ENCODE measurements at regions of chr17 and their contacts with region 1.

Region 1: DNA sequence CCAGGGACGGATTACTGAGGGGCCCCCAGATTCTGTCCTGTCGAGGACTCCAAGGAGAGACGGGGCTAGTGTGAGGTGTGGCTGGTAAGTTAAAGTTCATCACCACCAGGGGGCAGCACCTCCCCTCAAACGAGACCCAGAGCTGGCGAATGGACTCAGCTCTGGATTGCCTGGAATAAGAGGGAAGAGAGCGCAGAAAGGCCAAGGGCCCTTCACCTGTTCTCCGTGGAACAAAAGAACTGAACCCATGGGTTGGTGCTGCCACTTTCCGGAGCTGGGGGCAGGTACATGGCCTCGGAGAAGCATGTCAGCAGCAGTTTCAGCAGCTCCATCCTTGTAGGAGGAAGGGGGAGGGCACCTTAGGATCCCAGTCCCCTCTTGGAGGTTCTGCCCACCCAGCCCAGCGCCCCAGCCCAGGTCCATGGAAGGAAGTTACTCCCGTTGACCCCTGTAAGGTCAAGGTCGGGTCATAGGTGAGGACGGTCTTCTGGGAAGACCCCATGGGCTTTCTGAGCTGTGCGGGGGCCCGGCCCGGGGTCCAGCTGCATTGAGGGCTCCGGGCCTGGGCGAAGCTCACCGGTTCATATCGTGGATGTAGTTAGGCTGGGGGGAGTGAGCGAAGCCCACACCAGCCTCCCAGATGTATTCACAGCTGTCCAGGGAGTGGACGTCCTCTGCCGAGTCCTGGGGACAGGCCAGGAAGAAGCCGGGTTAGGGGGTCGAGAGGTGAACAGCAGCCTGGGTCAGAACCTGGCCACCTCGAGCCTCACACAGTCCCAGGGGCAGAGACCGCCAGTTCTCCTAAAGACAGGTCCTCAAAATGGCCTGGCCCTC is 10.7 kb downstream of the HID1 start:
- DNase-seq: peak; percentile 69 to 88 (median 78)
- ATAC-seq: peak; percentile 80
- H3K4me3 ChIP-seq: no peak overlapping the region
- H3K4me3 Mint-ChIP-seq: peak overlapping the region in 2 of 10 donors; percentile 14 to 33
- H3K27ac ChIP-seq: no peak overlapping the region
- H3K27ac Mint-ChIP-seq: no peak overlapping the region
- H3K4me1 ChIP-seq: peaks cover 0 to 4% of the 10 kb centered on the region in 2 donors
- H3K4me1 Mint-ChIP-seq: peaks cover 0 to 8% (median 5%) of the 10 kb centered on the region in 7 donors
- H3K27me3 ChIP-seq: no peaks in the 10 kb centered on the region
- H3K27me3 Mint-ChIP-seq: peaks cover 0 to 3% (median 0%) of the 10 kb centered on the region in 5 donors

Region 2: DNA sequence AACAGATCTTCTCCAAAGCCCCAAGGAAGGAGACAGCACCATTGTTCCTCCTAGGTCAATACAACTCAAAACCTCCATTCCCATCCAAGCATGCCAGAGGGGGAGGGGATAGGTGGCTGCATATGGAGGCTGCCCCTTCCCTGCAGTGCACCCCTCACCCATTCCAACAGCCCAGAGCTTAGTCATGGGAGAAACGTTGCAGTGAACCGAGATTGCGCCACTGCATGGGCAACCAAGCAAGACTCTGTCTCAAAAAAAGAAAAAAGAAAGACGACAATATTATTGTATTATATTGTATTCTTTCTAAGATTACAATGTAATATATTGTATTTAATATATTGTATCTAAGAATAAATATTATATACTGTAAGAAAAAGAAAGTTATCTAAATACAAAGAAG is 302.0 kb before region 1 on chr17:
- CTCF ChIA-PET with region 1: interaction called, 5 read pairs
- POLR2A ChIA-PET with region 1: no interaction called
- intact Hi-C with region 1: loop called in 1 of 2 experiments (anchors 2 kb)
- DNase-seq: no peak
- ATAC-seq: no peak
- H3K4me3 ChIP-seq: no peak overlapping the region
- H3K4me3 Mint-ChIP-seq: no peak overlapping the region
- H3K27ac ChIP-seq: no peak overlapping the region
- H3K27ac Mint-ChIP-seq: peak overlapping the region in 1 of 9 donors; percentile 32
- H3K4me1 ChIP-seq: peaks cover 0 to 3% of the 10 kb centered on the region in 2 donors
- H3K4me1 Mint-ChIP-seq: peaks cover 4 to 9% (median 6%) of the 10 kb centered on the region in 7 donors
- H3K27me3 ChIP-seq: peaks cover 0 to 3% of the 10 kb centered on the region in 2 donors
- H3K27me3 Mint-ChIP-seq: peaks cover 29 to 78% (median 36%) of the 10 kb centered on the region in 5 donors

Region 3: GRCh38 chr17:74923533-74924249 is 38.2 kb before region 1 on chr17:
- CTCF ChIA-PET with region 1: interaction called, 11 read pairs
- POLR2A ChIA-PET with region 1: no interaction called
- intact Hi-C with region 1: loop called (anchors 1 kb)
- DNase-seq: peak; percentile 50 to 85 (median 70)
- ATAC-seq: peak; percentile 85
- H3K4me3 ChIP-seq: no peak overlapping the region
- H3K4me3 Mint-ChIP-seq: peak overlapping the region; percentile 23 to 76 (median 62)
- H3K27ac ChIP-seq: no peak overlapping the region
- H3K27ac Mint-ChIP-seq: peak overlapping the region in 1 of 9 donors; percentile 48
- H3K4me1 ChIP-seq: peaks cover 3 to 12% of the 10 kb centered on the region in 2 donors
- H3K4me1 Mint-ChIP-seq: peaks cover 2 to 21% (median 6%) of the 10 kb centered on the region in 7 donors
- H3K27me3 ChIP-seq: peaks cover 0 to 11% of the 10 kb centered on the region in 2 donors
- H3K27me3 Mint-ChIP-seq: peaks cover 34 to 74% (median 39%) of the 10 kb centered on the region in 5 donors

Region 4: GRCh38 chr17:75006653-75007052 is 44.8 kb after region 1 on chr17:
- CTCF ChIA-PET with region 1: interaction called, 42 read pairs
- POLR2A ChIA-PET with region 1: interaction called, 9 read pairs
- intact Hi-C with region 1: loop called (anchors 1 kb)
- DNase-seq: no peak
- ATAC-seq: no peak
- H3K4me3 ChIP-seq: no peak overlapping the region
- H3K4me3 Mint-ChIP-seq: no peak overlapping the region
- H3K27ac ChIP-seq: no peak overlapping the region
- H3K27ac Mint-ChIP-seq: peak overlapping the region in 1 of 9 donors; percentile 66
- H3K4me1 ChIP-seq: no peaks in the 10 kb centered on the region
- H3K4me1 Mint-ChIP-seq: peaks cover 0 to 5% (median 0%) of the 10 kb centered on the region in 7 donors
- H3K27me3 ChIP-seq: no peaks in the 10 kb centered on the region
- H3K27me3 Mint-ChIP-seq: peaks cover 0 to 5% (median 0%) of the 10 kb centered on the region in 5 donors

Region 5: DNA sequence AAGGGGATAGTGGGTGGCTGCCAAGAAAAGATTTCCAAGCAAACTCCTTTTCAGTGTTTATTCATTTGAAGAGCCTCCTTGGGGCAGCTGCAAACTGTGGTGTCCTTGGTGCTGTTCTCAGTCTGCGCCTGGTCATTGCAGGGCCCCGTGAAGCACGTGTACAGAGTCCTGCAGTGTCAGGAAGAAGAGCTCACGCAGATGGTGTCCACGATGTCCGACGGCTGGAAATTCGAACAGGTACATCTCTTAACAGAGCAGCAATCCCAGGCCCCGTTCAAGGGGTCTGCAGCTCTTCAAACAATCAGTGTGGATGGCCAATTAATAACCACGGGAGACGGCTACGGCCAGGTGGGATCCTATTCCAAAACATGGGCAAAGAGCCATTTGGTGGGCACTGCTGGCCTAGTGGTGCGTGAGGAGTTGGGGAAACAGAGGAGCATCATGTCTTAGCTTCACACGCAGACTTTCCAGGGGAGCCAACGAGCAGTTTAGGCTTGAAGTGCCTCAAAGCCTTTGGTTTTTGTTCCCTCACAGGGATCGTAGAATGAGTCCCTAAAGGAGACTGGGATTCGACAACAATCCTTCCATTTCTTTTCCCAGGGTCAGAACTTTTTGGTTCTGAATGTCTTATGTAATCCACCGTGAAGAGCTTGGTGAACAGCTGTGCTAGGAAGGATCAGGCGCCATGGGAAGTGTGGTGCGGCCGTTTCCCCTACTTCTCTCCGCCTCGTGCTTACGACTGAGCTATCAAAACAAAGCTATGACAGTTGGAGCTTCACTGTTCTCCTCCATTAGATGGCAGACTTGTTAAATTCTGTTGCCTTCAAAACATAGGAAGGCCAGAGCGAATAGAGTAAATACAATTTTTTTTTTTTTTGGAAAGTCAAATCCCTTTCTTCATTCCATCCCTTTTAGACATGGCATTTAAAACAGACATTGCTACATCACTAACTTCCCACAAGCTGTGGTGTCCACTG is 97.8 kb after region 1 on chr17:
- CTCF ChIA-PET with region 1: interaction called, 17 read pairs
- POLR2A ChIA-PET with region 1: interaction called, 3 read pairs
- intact Hi-C with region 1: no loop called
- DNase-seq: peak in 6 of 9 donors; percentile 32 to 56 (median 48)
- ATAC-seq: peak; percentile 79
- H3K4me3 ChIP-seq: no peak overlapping the region
- H3K4me3 Mint-ChIP-seq: no peak overlapping the region
- H3K27ac ChIP-seq: peak overlapping the region; percentile 23
- H3K27ac Mint-ChIP-seq: peak overlapping the region in 8 of 9 donors; percentile 51 to 91 (median 81)
- H3K4me1 ChIP-seq: no peaks in the 10 kb centered on the region
- H3K4me1 Mint-ChIP-seq: peaks cover 0 to 26% (median 20%) of the 10 kb centered on the region in 7 donors
- H3K27me3 ChIP-seq: no peaks in the 10 kb centered on the region
- H3K27me3 Mint-ChIP-seq: no peaks in the 10 kb centered on the region

Region 6: DNA sequence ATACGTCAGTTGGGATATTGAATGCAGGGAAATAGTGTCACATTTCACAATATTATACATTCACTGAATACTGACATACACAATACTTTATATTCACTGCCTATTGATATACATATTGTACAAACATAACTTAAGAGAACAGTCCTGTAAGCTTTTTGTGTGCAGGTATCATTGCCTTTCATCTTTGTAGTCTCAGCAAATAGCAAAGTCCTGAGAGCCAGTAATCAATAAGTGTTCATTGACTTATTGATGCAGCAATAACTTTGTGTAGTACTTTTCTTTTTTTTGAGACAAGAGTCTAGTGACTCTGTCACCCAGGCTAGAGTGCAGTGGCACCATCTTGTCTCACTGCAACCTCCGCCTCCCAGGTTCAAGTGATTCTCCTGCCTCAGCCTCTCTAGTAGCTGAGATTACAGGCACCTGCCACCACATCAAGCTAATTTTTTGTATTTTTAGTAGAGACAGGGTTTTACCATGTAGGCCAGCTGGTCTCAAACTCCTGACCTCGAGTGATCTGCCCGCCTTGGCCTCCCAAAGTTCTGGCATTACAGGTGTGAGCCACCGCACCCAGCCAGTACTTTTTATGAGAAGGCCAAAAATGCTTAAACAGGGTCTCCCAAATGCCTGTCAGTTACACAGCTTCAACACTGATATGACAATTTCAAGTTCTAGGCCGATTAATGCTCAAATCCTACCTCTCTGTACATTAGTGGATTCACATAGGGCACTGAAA is 238.2 kb after region 1 on chr17:
- CTCF ChIA-PET with region 1: interaction called, 53 read pairs
- POLR2A ChIA-PET with region 1: interaction called, 3 read pairs
- intact Hi-C with region 1: loop called (anchors 1 kb)
- DNase-seq: no peak
- ATAC-seq: no peak
- H3K4me3 ChIP-seq: no peak overlapping the region
- H3K4me3 Mint-ChIP-seq: no peak overlapping the region
- H3K27ac ChIP-seq: no peak overlapping the region
- H3K27ac Mint-ChIP-seq: no peak overlapping the region
- H3K4me1 ChIP-seq: no peaks in the 10 kb centered on the region
- H3K4me1 Mint-ChIP-seq: peaks cover 4 to 12% (median 8%) of the 10 kb centered on the region in 7 donors
- H3K27me3 ChIP-seq: no peaks in the 10 kb centered on the region
- H3K27me3 Mint-ChIP-seq: no peaks in the 10 kb centered on the region

Region 7: GRCh38 chr17:75412455-75413317 is 450.8 kb after region 1 on chr17:
- CTCF ChIA-PET with region 1: no interaction called
- POLR2A ChIA-PET with region 1: no interaction called
- intact Hi-C with region 1: loop called (anchors 1 kb)
- DNase-seq: peak; percentile 52 to 82 (median 73)
- ATAC-seq: peak; percentile 88
- H3K4me3 ChIP-seq: peak overlapping the region; percentile 25
- H3K4me3 Mint-ChIP-seq: peak overlapping the region; percentile 23 to 75 (median 60)
- H3K27ac ChIP-seq: peak overlapping the region; percentile 19
- H3K27ac Mint-ChIP-seq: peak overlapping the region in 6 of 9 donors; percentile 15 to 87 (median 45)
- H3K4me1 ChIP-seq: peaks cover 3 to 13% of the 10 kb centered on the region in 2 donors
- H3K4me1 Mint-ChIP-seq: peaks cover 14 to 26% (median 23%) of the 10 kb centered on the region in 7 donors
- H3K27me3 ChIP-seq: no peaks in the 10 kb centered on the region
- H3K27me3 Mint-ChIP-seq: peaks cover 0 to 27% (median 0%) of the 10 kb centered on the region in 5 donors

Measured in naive thymus-derived CD4-positive, alpha-beta T cell (primary cell).